PC-9 (cell line): ENCODE measurements at regions of chr9 and their contacts with region 1.

Region 1: DNA sequence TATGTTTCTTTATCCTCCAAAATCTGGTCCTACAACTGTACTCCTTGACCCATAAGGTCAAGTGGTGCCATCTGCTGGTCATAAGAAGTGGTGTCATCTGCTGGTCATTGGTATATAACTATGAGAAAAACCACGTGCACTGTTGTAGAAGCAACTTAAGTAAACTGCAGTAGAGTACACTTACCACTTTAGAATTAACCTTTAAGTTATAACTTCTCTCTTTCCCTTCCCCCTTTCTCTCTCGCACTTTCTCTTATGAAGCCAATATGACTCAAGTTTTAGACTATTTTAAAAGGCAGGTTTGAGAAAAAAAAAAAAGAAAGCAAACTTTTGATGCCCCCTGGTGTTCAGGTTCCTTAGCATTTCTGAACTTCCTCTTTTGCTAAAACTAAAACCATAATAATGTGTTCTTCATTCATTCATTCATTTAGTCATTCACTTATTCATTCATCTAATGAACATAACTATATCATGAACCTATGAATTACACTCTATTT is 12.8 kb upstream of the MTAP start:
- DNase-seq: peak; percentile 28 to 80
- H3K4me3 ChIP-seq: peak overlapping the region; percentile 46; the same call in 1 of the 2 replicates
- H3K27ac ChIP-seq: no peak overlapping the region
- H3K4me1 ChIP-seq: peaks cover 18% of the 10 kb centered on the region
- H3K27me3 ChIP-seq: no peaks in the 10 kb centered on the region
- CTCF ChIP-seq: peak; percentile 92

Region 2: GRCh38 chr9:21252721-21253547 is 536.7 kb before region 1 on chr9:
- CTCF ChIA-PET with region 1: no interaction called
- POLR2A ChIA-PET with region 1: no interaction called
- intact Hi-C with region 1: loop called (anchors 5 kb)
- DNase-seq: peak in 1 of 2 experiments; percentile 5
- H3K4me3 ChIP-seq: no peak overlapping the region
- H3K27ac ChIP-seq: no peak overlapping the region
- H3K4me1 ChIP-seq: no peaks in the 10 kb centered on the region
- H3K27me3 ChIP-seq: no peaks in the 10 kb centered on the region
- CTCF ChIP-seq: peak; percentile 74

Region 3: GRCh38 chr9:21434202-21435014 is 355.2 kb before region 1 on chr9:
- CTCF ChIA-PET with region 1: interaction called, 3 read pairs
- POLR2A ChIA-PET with region 1: no interaction called
- intact Hi-C with region 1: loop called (anchors 1 kb)
- DNase-seq: peak in 1 of 2 experiments; percentile 26
- H3K4me3 ChIP-seq: no peak overlapping the region
- H3K27ac ChIP-seq: no peak overlapping the region
- H3K4me1 ChIP-seq: no peaks in the 10 kb centered on the region
- H3K27me3 ChIP-seq: no peaks in the 10 kb centered on the region
- CTCF ChIP-seq: peak; percentile 66

Region 4: GRCh38 chr9:21506626-21507484 is 282.7 kb before region 1 on chr9:
- CTCF ChIA-PET with region 1: no interaction called
- POLR2A ChIA-PET with region 1: no interaction called
- intact Hi-C with region 1: loop called (anchors 2 kb)
- DNase-seq: peak; percentile 37 to 75
- H3K4me3 ChIP-seq: no peak overlapping the region
- H3K27ac ChIP-seq: peak overlapping the region; percentile 43
- H3K4me1 ChIP-seq: peaks cover 11% of the 10 kb centered on the region
- H3K27me3 ChIP-seq: no peaks in the 10 kb centered on the region
- CTCF ChIP-seq: no peak

Region 5: GRCh38 chr9:21591221-21592062 is 198.1 kb before region 1 on chr9:
- CTCF ChIA-PET with region 1: no interaction called
- POLR2A ChIA-PET with region 1: no interaction called
- intact Hi-C with region 1: loop called (anchors 1 kb)
- DNase-seq: peak; percentile 80 to 88
- H3K4me3 ChIP-seq: peak overlapping the region; percentile 50
- H3K27ac ChIP-seq: peak overlapping the region; percentile 98
- H3K4me1 ChIP-seq: peaks cover 32% of the 10 kb centered on the region
- H3K27me3 ChIP-seq: no peaks in the 10 kb centered on the region
- CTCF ChIP-seq: no peak